Activated naive CD4-positive, alpha-beta T cell treated with anti-CD3 and anti-CD28 coated beads for 36 hours (primary cell): ENCODE measurements at regions of chr19 and their contacts with region 1.

Region 1: GRCh38 chr19:18588611-18589379 is at the start of gene REX1BD:
- DNase-seq: peak; percentile 83
- H3K4me3 Mint-ChIP-seq: peak within 1 kb of the TSS; percentile 87
- H3K27ac Mint-ChIP-seq: peak within 1 kb of the TSS; percentile 87
- H3K4me1 Mint-ChIP-seq: peaks cover 27% of the 10 kb centered on the region
- H3K27me3 Mint-ChIP-seq: no peaks in the 10 kb centered on the region
- total RNA-seq, gene REX1BD: 62.9 to 68.5 TPM

Region 2: DNA sequence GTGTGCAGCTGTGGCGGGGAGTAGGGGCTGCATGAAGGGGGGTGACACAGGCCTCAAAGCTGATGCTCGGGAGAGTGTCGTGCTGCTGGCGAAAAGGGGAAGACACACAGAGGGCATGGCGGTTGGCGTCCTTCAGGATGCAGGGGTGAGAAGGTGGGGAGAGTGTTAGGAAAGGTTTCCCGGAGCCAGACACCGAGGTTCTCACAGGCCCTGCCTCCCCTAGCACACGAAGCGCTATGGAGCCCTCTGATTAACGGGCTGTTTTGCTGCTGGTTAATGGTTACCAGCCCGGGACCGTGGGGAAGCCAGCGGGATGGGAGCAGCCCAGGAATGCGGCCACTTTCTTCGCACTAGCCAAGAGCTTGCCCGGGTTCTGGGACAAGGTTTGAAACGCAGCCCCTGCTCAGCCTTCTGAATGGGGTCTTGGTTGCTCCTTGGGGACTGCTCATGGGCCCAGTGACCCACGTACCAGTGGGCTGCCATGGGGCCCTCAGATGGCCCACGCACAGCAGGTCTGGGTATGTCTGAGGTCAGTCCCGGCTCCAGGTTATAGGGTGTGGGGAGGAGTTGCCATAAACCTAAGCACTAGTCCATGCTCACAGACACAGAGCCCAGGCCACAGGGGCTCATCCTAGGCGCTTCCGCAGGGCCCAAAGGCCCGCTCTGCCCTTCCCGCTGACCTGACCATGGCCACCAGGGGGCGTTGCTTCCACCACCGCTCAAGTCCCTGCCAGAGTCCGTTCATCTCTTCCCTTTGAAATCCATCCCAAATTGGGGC is 119.5 kb before region 1 on chr19:
- CTCF ChIA-PET with region 1: interaction called, 3 read pairs
- intact Hi-C with region 1: loop called (anchors 2 kb)
- DNase-seq: peak; percentile 72
- H3K4me3 Mint-ChIP-seq: no peak overlapping the region
- H3K27ac Mint-ChIP-seq: no peak overlapping the region
- H3K4me1 Mint-ChIP-seq: peaks cover 2% of the 10 kb centered on the region
- H3K27me3 Mint-ChIP-seq: no peaks in the 10 kb centered on the region

Region 3: GRCh38 chr19:18557474-18558201 is 31.2 kb before region 1 on chr19 and contains the start of gene KXD1:
- CTCF ChIA-PET with region 1: interaction called, 14 read pairs
- intact Hi-C with region 1: loop called (anchors 1 kb)
- DNase-seq: peak; percentile 99
- H3K4me3 Mint-ChIP-seq: peak within 1 kb of the TSS; percentile 93
- H3K27ac Mint-ChIP-seq: peak within 1 kb of the TSS; percentile 92
- H3K4me1 Mint-ChIP-seq: peaks cover 24% of the 10 kb centered on the region
- H3K27me3 Mint-ChIP-seq: no peaks in the 10 kb centered on the region
- total RNA-seq, gene KXD1: 86.7 TPM

Region 4: DNA sequence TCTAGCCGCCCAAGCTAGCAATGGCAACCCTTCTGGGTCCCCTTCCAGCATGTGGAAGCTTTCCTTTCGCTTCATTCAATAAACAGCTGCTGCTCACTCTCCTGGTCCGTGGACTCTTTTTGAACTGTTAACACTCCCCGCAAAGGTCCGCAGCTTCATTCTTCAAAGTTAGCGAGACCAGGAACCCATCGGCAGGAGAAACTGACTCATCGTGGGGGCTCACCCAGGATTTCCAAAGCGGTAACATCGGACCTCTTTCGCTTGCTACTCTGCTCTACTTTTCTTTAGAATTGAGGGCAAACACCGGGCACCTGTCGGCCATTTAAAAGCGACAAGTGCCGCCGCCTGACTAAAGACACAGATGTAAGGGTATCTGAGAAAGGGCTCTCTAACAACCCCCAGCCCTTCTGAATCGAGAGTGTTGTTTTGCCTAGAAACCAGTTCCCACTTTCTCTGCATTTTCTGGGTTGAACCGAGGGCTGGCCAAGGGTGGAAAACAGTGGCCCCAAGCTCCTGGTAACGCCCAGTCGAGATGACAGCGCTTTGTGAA is 11.4 kb before region 1 on chr19:
- CTCF ChIA-PET with region 1: interaction called, 39 read pairs
- intact Hi-C with region 1: no loop called
- DNase-seq: no peak
- H3K4me3 Mint-ChIP-seq: no peak overlapping the region
- H3K27ac Mint-ChIP-seq: no peak overlapping the region
- H3K4me1 Mint-ChIP-seq: peaks cover 24% of the 10 kb centered on the region
- H3K27me3 Mint-ChIP-seq: no peaks in the 10 kb centered on the region

Region 5: GRCh38 chr19:18683213-18683939 is 94.6 kb after region 1 on chr19 and contains the start of gene CRTC1:
- CTCF ChIA-PET with region 1: interaction called, 4 read pairs
- intact Hi-C with region 1: loop called (anchors 5 kb)
- DNase-seq: peak; percentile 94
- H3K4me3 Mint-ChIP-seq: peak within 1 kb of the TSS; percentile 87
- H3K27ac Mint-ChIP-seq: peak within 1 kb of the TSS; percentile 84
- H3K4me1 Mint-ChIP-seq: peaks cover 18% of the 10 kb centered on the region
- H3K27me3 Mint-ChIP-seq: no peaks in the 10 kb centered on the region
- total RNA-seq, gene CRTC1: 4.0 to 4.2 TPM